ENCODE measurements at regions of chr4 and their contacts with region 1.

Region 1: DNA sequence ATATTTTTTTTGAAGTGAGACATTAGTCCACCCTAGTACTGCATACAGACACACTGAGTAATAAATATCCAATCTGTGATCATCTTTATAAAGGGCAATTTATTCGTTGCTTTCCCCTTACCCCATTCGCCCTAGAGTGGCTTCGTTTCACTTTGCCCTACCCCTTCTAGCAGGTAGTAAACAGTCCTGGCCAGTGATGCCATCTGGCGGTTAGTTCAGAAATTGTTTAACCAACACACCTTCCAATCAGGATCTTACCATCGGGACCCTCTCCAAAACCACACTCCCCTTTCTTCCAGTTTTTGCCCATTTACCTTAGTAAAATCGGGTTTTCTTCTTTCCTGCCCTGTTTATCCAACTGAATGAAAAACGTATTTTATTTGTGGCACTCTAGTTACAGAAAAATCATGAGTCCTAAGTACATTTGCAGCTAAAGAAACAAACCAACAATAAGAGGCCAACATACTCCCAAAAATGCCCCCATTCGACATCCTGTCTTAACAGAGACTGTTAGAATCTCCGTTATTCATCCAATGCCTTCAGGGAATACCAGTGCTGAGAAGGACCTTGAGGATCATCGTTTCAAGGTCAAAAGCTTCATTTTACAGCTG is 2.2 kb downstream of the PPA2 start:
- DNase-seq: peak; percentile 57
- H3K4me3 Mint-ChIP-seq: peak overlapping the region; percentile 98
- H3K27ac Mint-ChIP-seq: peak overlapping the region; percentile 57
- H3K4me1 Mint-ChIP-seq: peaks cover 41% of the 10 kb centered on the region
- H3K27me3 Mint-ChIP-seq: peaks cover 11% of the 10 kb centered on the region

Region 2: GRCh38 chr4:104930298-104930697 is 541.4 kb before region 1 on chr4:
- intact Hi-C with region 1: loop called (anchors 5 kb)
- DNase-seq: no peak
- H3K4me3 Mint-ChIP-seq: no peak overlapping the region
- H3K27ac Mint-ChIP-seq: no peak overlapping the region
- H3K4me1 Mint-ChIP-seq: peaks cover 28% of the 10 kb centered on the region
- H3K27me3 Mint-ChIP-seq: peaks cover 15% of the 10 kb centered on the region

Region 3: GRCh38 chr4:105140684-105141490 is 330.8 kb before region 1 on chr4:
- intact Hi-C with region 1: loop called (anchors 1 kb)
- DNase-seq: no peak
- H3K4me3 Mint-ChIP-seq: no peak overlapping the region
- H3K27ac Mint-ChIP-seq: no peak overlapping the region
- H3K4me1 Mint-ChIP-seq: peaks cover 18% of the 10 kb centered on the region
- H3K27me3 Mint-ChIP-seq: no peaks in the 10 kb centered on the region

Region 4: GRCh38 chr4:105306158-105306781 is 165.4 kb before region 1 on chr4:
- intact Hi-C with region 1: loop called (anchors 1 kb)
- DNase-seq: peak; percentile 47
- H3K4me3 Mint-ChIP-seq: peak overlapping the region; percentile 18
- H3K27ac Mint-ChIP-seq: peak overlapping the region; percentile 74
- H3K4me1 Mint-ChIP-seq: peaks cover 28% of the 10 kb centered on the region
- H3K27me3 Mint-ChIP-seq: no peaks in the 10 kb centered on the region

Region 5: GRCh38 chr4:105708530-105709391 is 237.1 kb after region 1 on chr4 and contains the starts of genes GSTCD and INTS12:
- intact Hi-C with region 1: loop called (anchors 5 kb)
- DNase-seq: peak; percentile 82
- H3K4me3 Mint-ChIP-seq: peak within 1 kb of the TSS; percentile 98
- H3K27ac Mint-ChIP-seq: peak within 1 kb of the TSS; percentile 94
- H3K4me1 Mint-ChIP-seq: peaks cover 26% of the 10 kb centered on the region
- H3K27me3 Mint-ChIP-seq: no peaks in the 10 kb centered on the region
- total RNA-seq, gene GSTCD: 15.7 and 16.7 TPM in 2 replicates
- total RNA-seq, gene INTS12: 18.5 and 22.0 TPM in 2 replicates